CD4-positive, alpha-beta memory T cell (primary cell): ENCODE measurements at regions of chr11 and their contacts with region 1.

Region 1: GRCh38 chr11:62427630-62428233 is 8.9 kb downstream of the SCGB1A1 start:
- DNase-seq: peak in 1 of 5 donors; percentile 5
- H3K4me3 ChIP-seq: no peak overlapping the region
- H3K4me3 Mint-ChIP-seq: peak overlapping the region in 7 of 8 donors; percentile 11 to 84 (median 55)
- H3K27ac ChIP-seq: no peak overlapping the region
- H3K27ac Mint-ChIP-seq: peak overlapping the region; percentile 68 to 94 (median 89)
- H3K4me1 ChIP-seq: peaks cover 45% of the 10 kb centered on the region
- H3K4me1 Mint-ChIP-seq: peaks cover 20 to 42% (median 32%) of the 10 kb centered on the region in 4 donors
- H3K27me3 ChIP-seq: no peaks in the 10 kb centered on the region
- H3K27me3 Mint-ChIP-seq: no peaks in the 10 kb centered on the region

Region 2: DNA sequence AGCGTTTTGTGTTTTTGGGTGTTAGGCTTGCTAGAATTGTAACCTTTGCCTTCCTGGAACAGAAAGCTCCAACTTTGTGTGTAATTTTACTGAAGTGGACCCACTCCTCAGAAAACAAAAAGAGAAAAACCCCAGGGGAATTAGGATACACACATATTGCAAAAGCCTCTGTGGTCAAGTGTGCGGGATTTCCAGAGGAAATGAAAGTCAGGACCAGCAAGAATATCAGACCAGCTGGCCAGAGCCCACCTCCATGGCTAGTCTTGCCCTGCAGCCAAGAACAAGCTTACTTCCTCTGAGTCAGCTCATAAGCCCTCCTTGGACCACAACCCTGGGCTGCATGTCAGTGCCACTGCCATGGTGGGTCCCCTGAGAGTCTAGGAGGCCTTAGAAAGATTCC is 423.3 kb before region 1 on chr11:
- CTCF ChIA-PET with region 1: no interaction called
- POLR2A ChIA-PET with region 1: no interaction called
- intact Hi-C with region 1: no loop called
- DNase-seq: no peak
- H3K4me3 ChIP-seq: no peak overlapping the region
- H3K4me3 Mint-ChIP-seq: no peak overlapping the region
- H3K27ac ChIP-seq: no peak overlapping the region
- H3K27ac Mint-ChIP-seq: no peak overlapping the region
- H3K4me1 ChIP-seq: no peaks in the 10 kb centered on the region
- H3K4me1 Mint-ChIP-seq: no peaks in the 10 kb centered on the region
- H3K27me3 ChIP-seq: no peaks in the 10 kb centered on the region
- H3K27me3 Mint-ChIP-seq: peaks cover 0 to 5% of the 10 kb centered on the region in 2 donors

Region 3: GRCh38 chr11:62054484-62055121 is 373.1 kb before region 1 on chr11:
- CTCF ChIA-PET with region 1: no interaction called
- POLR2A ChIA-PET with region 1: no interaction called
- intact Hi-C with region 1: no loop called
- DNase-seq: peak; percentile 11 to 53 (median 36)
- H3K4me3 ChIP-seq: no peak overlapping the region
- H3K4me3 Mint-ChIP-seq: no peak overlapping the region
- H3K27ac ChIP-seq: no peak overlapping the region
- H3K27ac Mint-ChIP-seq: peak overlapping the region in 1 of 7 donors; percentile 29
- H3K4me1 ChIP-seq: no peaks in the 10 kb centered on the region
- H3K4me1 Mint-ChIP-seq: no peaks in the 10 kb centered on the region
- H3K27me3 ChIP-seq: no peaks in the 10 kb centered on the region
- H3K27me3 Mint-ChIP-seq: peaks cover 0 to 3% of the 10 kb centered on the region in 2 donors

Region 4: DNA sequence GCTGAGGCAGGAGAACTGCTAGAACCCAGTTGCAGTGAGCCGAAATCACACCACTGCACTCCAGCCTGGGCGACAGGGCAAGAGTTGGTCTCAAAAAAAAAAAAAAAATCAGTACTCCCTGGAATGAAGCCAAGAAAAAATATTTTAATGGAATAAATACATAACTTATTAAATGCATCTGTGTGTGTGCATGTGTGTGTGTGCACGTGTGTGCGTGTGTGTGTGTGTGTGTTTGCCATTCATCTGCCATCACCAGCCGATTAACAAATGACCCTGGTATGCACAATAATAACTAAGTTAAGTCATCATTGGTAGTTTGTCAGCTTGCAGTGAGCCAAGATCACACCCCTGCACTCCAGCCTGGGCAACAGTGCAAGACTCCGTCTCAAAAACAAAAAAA is 43.9 kb before region 1 on chr11:
- CTCF ChIA-PET with region 1: interaction called, 8 read pairs
- POLR2A ChIA-PET with region 1: no interaction called
- intact Hi-C with region 1: loop called (anchors 1 kb)
- DNase-seq: no peak
- H3K4me3 ChIP-seq: no peak overlapping the region
- H3K4me3 Mint-ChIP-seq: no peak overlapping the region
- H3K27ac ChIP-seq: no peak overlapping the region
- H3K27ac Mint-ChIP-seq: no peak overlapping the region
- H3K4me1 ChIP-seq: peaks cover 18% of the 10 kb centered on the region
- H3K4me1 Mint-ChIP-seq: peaks cover 5 to 19% (median 10%) of the 10 kb centered on the region in 4 donors
- H3K27me3 ChIP-seq: no peaks in the 10 kb centered on the region
- H3K27me3 Mint-ChIP-seq: no peaks in the 10 kb centered on the region

Region 5: GRCh38 chr11:62394825-62395538 is 32.8 kb before region 1 on chr11:
- CTCF ChIA-PET with region 1: interaction called, 60 read pairs
- POLR2A ChIA-PET with region 1: interaction called, 8 read pairs
- intact Hi-C with region 1: no loop called
- DNase-seq: peak; percentile 56 to 63 (median 59)
- H3K4me3 ChIP-seq: no peak overlapping the region
- H3K4me3 Mint-ChIP-seq: no peak overlapping the region
- H3K27ac ChIP-seq: no peak overlapping the region
- H3K27ac Mint-ChIP-seq: peak overlapping the region in 4 of 7 donors; percentile 58 to 68 (median 60)
- H3K4me1 ChIP-seq: peaks cover 24% of the 10 kb centered on the region
- H3K4me1 Mint-ChIP-seq: peaks cover 8 to 12% (median 10%) of the 10 kb centered on the region in 4 donors
- H3K27me3 ChIP-seq: no peaks in the 10 kb centered on the region
- H3K27me3 Mint-ChIP-seq: no peaks in the 10 kb centered on the region

Region 6: GRCh38 chr11:62400760-62401159 is 27.0 kb before region 1 on chr11:
- CTCF ChIA-PET with region 1: interaction called, 60 read pairs
- POLR2A ChIA-PET with region 1: interaction called, 8 read pairs
- intact Hi-C with region 1: no loop called
- DNase-seq: no peak
- H3K4me3 ChIP-seq: no peak overlapping the region
- H3K4me3 Mint-ChIP-seq: peak overlapping the region in 2 of 8 donors; percentile 10 to 23
- H3K27ac ChIP-seq: no peak overlapping the region
- H3K27ac Mint-ChIP-seq: peak overlapping the region in 1 of 7 donors; percentile 37
- H3K4me1 ChIP-seq: peaks cover 44% of the 10 kb centered on the region
- H3K4me1 Mint-ChIP-seq: peaks cover 22 to 33% (median 27%) of the 10 kb centered on the region in 4 donors
- H3K27me3 ChIP-seq: no peaks in the 10 kb centered on the region
- H3K27me3 Mint-ChIP-seq: peaks cover 0 to 1% of the 10 kb centered on the region in 2 donors

Region 7: GRCh38 chr11:62542750-62543567 is 115.2 kb after region 1 on chr11:
- CTCF ChIA-PET with region 1: interaction called, 151 read pairs
- POLR2A ChIA-PET with region 1: interaction called, 70 read pairs
- intact Hi-C with region 1: loop called (anchors 1 kb)
- DNase-seq: peak; percentile 71 to 92 (median 71)
- H3K4me3 ChIP-seq: peak overlapping the region; percentile 91 to 94
- H3K4me3 Mint-ChIP-seq: peak overlapping the region; percentile 97 to 99 (median 98)
- H3K27ac ChIP-seq: peak overlapping the region; percentile 97
- H3K27ac Mint-ChIP-seq: peak overlapping the region; percentile 94 to 99 (median 98)
- H3K4me1 ChIP-seq: peaks cover 77% of the 10 kb centered on the region
- H3K4me1 Mint-ChIP-seq: peaks cover 48 to 88% (median 63%) of the 10 kb centered on the region in 4 donors
- H3K27me3 ChIP-seq: no peaks in the 10 kb centered on the region
- H3K27me3 Mint-ChIP-seq: no peaks in the 10 kb centered on the region

Region 8: GRCh38 chr11:62567018-62567633 is 139.4 kb after region 1 on chr11:
- CTCF ChIA-PET with region 1: interaction called, 405 read pairs
- POLR2A ChIA-PET with region 1: interaction called, 4 read pairs
- intact Hi-C with region 1: no loop called
- DNase-seq: no peak
- H3K4me3 ChIP-seq: no peak overlapping the region
- H3K4me3 Mint-ChIP-seq: peak overlapping the region in 2 of 8 donors; percentile 28 to 73
- H3K27ac ChIP-seq: peak overlapping the region; percentile 15
- H3K27ac Mint-ChIP-seq: peak overlapping the region; percentile 51 to 85 (median 81)
- H3K4me1 ChIP-seq: peaks cover 38% of the 10 kb centered on the region
- H3K4me1 Mint-ChIP-seq: peaks cover 25 to 51% (median 38%) of the 10 kb centered on the region in 4 donors
- H3K27me3 ChIP-seq: no peaks in the 10 kb centered on the region
- H3K27me3 Mint-ChIP-seq: no peaks in the 10 kb centered on the region

Region 9: DNA sequence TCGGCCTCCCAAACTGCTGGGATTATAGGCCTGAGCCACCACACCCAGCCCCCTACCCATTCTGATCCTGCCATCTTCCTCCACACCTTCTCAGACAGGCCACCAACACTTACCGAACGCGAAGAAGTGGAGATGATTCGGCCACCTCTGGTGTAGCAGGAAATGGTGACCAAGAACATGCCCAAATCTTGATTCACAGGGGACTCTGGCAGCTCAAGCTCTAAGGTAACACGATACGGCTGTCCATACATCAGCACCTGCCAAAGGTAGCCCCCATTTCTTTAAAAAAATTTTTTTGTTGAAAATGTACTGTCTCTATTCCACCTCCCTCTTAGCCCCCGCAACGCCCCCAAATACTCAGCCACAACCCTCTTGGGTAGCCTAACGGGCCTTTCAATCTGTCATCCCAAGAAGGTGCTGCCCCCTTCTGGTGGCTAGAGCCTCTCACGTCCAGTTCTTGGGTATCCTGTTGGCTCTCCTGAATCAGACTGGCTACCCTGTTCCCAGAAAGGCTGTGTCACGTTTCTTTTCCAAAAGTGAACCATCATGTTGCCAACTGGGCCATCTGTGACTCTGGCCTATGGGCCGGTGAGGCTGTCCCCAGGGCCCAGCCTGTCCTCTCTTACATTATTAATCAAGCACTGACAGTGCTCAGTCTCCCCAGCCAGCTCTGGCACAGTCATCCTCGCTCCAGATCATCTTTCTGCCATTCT is 266.9 kb after region 1 on chr11:
- CTCF ChIA-PET with region 1: interaction called, 45 read pairs
- POLR2A ChIA-PET with region 1: interaction called, 3 read pairs
- intact Hi-C with region 1: no loop called
- DNase-seq: peak; percentile 73 to 80 (median 74)
- H3K4me3 ChIP-seq: no peak overlapping the region
- H3K4me3 Mint-ChIP-seq: no peak overlapping the region
- H3K27ac ChIP-seq: no peak overlapping the region
- H3K27ac Mint-ChIP-seq: peak overlapping the region in 4 of 7 donors; percentile 7 to 77 (median 56)
- H3K4me1 ChIP-seq: no peaks in the 10 kb centered on the region
- H3K4me1 Mint-ChIP-seq: peaks cover 5 to 7% (median 6%) of the 10 kb centered on the region in 4 donors
- H3K27me3 ChIP-seq: no peaks in the 10 kb centered on the region
- H3K27me3 Mint-ChIP-seq: no peaks in the 10 kb centered on the region